ENCODE measurements at regions of chr6 and their contacts with region 1.

Region 1: DNA sequence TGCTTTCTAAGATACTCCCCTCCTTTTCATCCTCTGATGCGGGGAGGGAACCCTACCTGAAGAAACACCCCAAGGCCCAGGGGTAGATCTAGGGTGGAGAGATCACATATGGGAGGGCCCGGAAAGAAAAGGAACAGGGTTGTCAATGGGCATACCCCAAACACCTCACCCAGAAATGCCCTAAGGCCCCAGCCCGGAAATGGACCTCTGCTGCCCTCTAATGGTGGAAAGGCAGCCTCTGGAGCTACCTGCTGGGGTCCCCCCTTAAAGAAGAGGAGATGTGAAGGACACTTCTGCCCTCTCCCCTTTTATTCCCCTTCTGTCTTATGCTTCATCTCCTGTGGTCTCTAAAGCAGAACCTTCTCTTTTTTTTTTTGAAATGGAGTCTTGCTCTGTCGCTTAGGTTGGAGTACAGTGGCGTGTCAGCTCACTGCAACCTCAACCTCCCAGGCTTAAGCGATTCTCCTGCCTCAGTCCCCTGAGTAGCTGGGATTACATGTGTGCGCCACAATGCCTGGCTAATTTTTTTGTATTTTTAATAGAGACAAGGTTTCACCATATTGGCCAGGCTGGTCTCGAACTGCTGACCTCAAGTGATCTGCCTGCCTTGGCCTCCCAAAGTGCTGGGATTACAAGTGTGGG is 458 bp upstream of the ARMC12 start:
- DNase-seq: peak; percentile 90
- H3K4me3 Mint-ChIP-seq: no peak overlapping the region
- H3K27ac Mint-ChIP-seq: peak overlapping the region; percentile 66
- H3K4me1 Mint-ChIP-seq: peaks cover 48% of the 10 kb centered on the region
- H3K27me3 Mint-ChIP-seq: no peaks in the 10 kb centered on the region

Region 2: DNA sequence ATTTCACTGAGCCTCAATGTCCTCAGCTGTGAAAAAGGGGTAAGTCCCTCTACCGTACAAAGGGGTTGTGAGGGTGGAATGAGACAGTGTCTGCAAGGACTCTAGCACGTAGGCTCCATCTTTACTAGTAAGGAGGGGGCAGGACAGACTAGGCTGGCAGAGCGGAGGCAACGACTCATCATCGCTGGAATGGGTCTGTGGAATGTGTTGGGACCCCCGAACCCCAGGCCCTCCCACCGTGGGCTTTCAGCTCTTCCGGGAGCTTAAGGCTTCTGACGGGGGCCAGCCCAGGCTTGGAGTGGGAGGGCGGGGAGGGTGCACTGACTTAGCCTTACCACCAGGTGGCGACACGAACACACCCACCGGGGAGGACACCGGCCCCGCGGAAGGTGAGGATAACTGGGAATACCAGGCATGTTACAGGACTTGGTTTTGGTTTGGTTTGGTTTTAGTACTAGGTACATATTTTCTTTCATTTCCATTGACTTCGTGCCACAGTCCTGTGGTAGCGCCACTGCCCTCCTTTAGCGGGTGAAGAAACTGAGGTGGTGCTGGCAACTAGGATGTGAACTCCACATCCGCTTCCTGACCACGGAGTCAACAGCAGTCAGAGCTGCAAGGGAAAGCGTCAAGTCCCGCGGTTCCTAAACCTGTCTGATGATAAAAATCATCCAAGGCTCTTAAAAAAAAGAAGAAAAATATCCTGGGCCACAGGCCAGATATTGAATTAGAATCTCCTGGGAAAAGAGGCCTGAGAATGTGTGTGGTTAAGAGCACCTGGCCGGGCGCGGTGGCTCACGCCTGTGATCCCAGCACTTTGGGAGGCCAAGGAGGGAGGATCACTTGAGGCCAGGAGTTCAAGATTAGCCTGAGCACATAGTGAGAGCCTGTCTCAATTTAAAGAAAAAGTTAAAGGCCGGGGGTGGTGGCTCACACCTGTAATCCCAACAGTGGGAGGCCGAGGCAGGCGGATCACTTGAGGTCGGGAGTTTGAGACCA is 213.4 kb before region 1 on chr6:
- CTCF ChIA-PET with region 1: interaction called, 11 read pairs
- POLR2A ChIA-PET with region 1: no interaction called
- DNase-seq: peak; percentile 80
- H3K4me3 Mint-ChIP-seq: peak overlapping the region; percentile 54
- H3K27ac Mint-ChIP-seq: peak overlapping the region; percentile 86
- H3K4me1 Mint-ChIP-seq: peaks cover 29% of the 10 kb centered on the region
- H3K27me3 Mint-ChIP-seq: peaks cover 2% of the 10 kb centered on the region

Region 3: DNA sequence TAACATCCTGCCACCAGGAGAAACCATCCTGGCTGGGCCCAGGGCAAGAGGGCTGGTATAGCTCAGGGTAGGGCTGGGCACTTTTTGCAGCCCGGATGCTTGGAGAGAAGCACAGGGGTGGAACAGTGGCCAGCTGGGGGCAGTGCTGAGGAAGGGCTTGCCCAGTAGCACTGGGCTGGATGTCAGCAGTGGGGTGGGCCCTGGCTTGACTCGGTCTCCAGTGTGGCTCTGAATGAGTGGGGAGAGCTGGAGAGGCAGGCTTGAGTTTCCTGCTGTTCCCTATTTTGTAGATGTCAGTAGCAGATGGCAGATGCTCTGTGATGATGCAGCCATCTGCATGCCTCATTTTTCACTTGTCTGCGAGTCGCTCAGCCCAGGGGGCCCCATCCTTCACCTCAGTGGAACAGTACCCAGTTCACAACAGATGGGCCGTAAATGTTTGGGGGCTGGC is 167.3 kb before region 1 on chr6:
- CTCF ChIA-PET with region 1: interaction called, 18 read pairs
- POLR2A ChIA-PET with region 1: no interaction called
- DNase-seq: peak; percentile 42
- H3K4me3 Mint-ChIP-seq: no peak overlapping the region
- H3K27ac Mint-ChIP-seq: no peak overlapping the region
- H3K4me1 Mint-ChIP-seq: no peaks in the 10 kb centered on the region
- H3K27me3 Mint-ChIP-seq: peaks cover 22% of the 10 kb centered on the region

Region 4: DNA sequence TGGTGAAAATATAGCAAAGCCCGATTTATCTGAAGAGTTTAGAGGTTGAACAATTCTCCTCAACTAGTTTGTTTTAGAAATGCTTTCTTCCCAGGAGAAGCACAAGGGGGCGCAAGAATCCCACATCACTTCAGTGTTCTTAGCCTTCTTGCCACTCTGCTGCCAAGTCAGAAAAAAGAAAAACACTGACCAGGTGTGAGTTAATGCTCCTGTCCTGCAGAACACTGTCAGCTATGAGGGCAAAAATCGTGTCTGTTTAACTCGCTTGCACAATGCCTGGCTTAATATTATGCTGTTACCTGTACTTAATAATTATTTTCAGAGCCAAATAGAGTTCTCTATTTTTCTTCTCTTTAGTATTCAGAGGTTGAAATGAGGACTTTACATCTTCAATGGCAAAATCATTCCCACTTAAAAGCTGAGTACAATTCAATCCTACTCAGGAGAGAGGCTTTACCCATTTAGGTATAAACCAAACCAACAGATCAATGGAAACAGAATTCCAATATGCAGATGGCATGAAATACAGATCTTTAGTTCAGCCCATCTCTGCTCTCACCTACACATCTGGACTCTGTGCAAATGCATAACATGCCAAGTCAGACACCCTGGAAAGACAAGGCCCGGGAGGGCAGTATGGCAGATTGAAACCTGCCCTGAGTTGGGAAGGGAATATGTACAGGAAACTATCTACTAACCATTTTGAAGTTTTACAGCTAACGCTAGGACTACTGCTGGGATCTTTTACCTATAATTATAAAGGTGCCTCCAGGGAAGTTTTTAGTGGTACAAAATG is 152.3 kb before region 1 on chr6:
- CTCF ChIA-PET with region 1: interaction called, 41 read pairs
- POLR2A ChIA-PET with region 1: no interaction called
- DNase-seq: peak; percentile 83
- H3K4me3 Mint-ChIP-seq: no peak overlapping the region
- H3K27ac Mint-ChIP-seq: peak overlapping the region; percentile 67
- H3K4me1 Mint-ChIP-seq: peaks cover 56% of the 10 kb centered on the region
- H3K27me3 Mint-ChIP-seq: no peaks in the 10 kb centered on the region

Region 5: DNA sequence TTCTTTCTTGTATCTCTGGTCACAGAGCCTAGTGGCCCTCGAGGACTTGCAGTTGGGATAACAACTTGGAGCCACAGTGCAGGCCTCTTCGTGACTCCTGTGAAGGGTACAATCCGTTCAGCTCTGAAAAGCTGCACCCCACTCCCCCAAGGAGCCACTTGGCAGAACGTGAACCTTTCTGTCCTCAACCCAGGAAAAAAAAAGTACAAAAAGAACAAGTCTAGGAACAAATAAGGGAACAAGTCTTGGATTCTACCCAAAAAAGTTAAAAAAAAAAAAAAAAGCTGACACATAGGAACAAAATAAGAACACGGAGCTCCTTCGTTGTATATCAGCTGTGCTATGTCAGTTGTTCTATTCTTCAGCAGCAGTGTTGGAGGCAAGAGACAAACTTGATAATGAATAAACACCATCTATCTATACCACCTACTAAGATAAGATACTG is 145.7 kb before region 1 on chr6:
- CTCF ChIA-PET with region 1: interaction called, 41 read pairs
- POLR2A ChIA-PET with region 1: no interaction called
- DNase-seq: no peak
- H3K4me3 Mint-ChIP-seq: no peak overlapping the region
- H3K27ac Mint-ChIP-seq: peak overlapping the region; percentile 78
- H3K4me1 Mint-ChIP-seq: peaks cover 74% of the 10 kb centered on the region
- H3K27me3 Mint-ChIP-seq: no peaks in the 10 kb centered on the region

Region 6: GRCh38 chr6:35601331-35602132 is 134.8 kb before region 1 on chr6:
- CTCF ChIA-PET with region 1: interaction called, 10 read pairs
- POLR2A ChIA-PET with region 1: no interaction called
- DNase-seq: peak; percentile 83
- H3K4me3 Mint-ChIP-seq: peak overlapping the region; percentile 69
- H3K27ac Mint-ChIP-seq: peak overlapping the region; percentile 94
- H3K4me1 Mint-ChIP-seq: peaks cover 71% of the 10 kb centered on the region
- H3K27me3 Mint-ChIP-seq: no peaks in the 10 kb centered on the region

Region 7: DNA sequence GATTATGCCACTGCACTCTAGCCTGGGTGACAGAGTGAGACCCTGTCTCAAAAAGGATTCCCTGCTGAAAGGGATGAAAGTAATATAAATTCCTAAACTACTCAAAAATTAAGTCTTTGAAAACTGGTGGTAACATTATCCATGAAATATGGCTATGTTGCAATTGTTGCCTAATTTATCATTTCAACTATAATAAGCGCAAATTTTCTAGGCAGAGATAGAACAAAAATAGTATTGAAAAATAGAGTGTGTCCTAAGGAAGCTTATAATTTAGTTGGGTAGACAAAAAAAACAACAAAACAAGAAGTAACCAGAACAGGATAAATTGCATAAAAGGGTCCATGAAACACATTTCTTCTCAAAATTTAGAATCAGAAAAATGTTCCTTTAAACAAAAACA is 115.7 kb before region 1 on chr6:
- CTCF ChIA-PET with region 1: interaction called, 10 read pairs
- POLR2A ChIA-PET with region 1: interaction called, 4 read pairs
- DNase-seq: no peak
- H3K4me3 Mint-ChIP-seq: no peak overlapping the region
- H3K27ac Mint-ChIP-seq: no peak overlapping the region
- H3K4me1 Mint-ChIP-seq: peaks cover 20% of the 10 kb centered on the region
- H3K27me3 Mint-ChIP-seq: no peaks in the 10 kb centered on the region

Measured in activated CD4-positive, alpha-beta T cell treated with anti-CD3 and anti-CD28 coated beads, Interleukin-2, amount 10 ng/mL, durations not matched to agents 7 days and 5 days (primary cell).